ENCODE measurements at regions of chr3 and their contacts with region 1.

Region 1: DNA sequence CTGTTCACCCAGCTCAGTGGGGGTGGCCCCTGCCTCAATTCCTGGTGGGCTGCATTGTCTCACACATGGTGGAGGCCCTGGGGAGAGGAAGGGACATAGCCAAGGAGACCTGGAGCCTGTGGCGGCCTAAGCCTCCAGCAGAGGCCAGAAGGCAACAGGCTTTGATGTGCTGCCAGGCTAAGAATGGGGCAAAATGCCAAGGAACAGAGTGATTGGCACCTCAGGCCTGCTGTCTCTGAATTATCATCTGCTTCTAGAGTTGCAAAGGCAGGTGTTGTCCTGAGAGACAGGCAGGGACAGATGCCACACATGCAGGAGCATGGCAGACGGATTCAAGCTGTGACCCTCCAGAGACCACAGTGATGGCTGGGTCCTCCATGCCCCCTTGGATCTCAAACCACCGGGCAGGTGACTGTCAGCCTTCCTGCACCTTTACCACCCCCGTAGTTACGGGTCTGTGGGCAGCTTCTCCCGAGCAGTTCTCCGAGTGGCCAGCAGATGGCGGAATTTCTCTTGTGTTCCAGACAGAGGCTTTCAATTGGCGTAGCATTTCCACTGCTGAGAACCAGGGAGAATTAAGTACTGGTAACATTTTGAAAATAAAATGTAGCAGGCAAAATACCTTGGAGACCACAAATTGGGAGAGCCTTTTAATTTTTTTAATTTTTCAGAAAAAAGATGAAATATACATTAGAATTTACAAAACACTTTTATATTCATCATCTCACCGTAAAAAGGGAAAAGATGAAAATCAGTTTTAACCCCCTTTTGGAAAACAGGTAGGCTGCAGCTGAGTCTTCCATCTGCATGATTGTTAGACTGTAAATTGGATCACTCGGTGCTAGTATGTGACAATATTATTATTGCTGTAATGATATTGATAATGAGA is 525.5 kb upstream of the CFAP20DC start:
- DNase-seq: peak; percentile 80 to 98 (median 93)

Region 2: DNA sequence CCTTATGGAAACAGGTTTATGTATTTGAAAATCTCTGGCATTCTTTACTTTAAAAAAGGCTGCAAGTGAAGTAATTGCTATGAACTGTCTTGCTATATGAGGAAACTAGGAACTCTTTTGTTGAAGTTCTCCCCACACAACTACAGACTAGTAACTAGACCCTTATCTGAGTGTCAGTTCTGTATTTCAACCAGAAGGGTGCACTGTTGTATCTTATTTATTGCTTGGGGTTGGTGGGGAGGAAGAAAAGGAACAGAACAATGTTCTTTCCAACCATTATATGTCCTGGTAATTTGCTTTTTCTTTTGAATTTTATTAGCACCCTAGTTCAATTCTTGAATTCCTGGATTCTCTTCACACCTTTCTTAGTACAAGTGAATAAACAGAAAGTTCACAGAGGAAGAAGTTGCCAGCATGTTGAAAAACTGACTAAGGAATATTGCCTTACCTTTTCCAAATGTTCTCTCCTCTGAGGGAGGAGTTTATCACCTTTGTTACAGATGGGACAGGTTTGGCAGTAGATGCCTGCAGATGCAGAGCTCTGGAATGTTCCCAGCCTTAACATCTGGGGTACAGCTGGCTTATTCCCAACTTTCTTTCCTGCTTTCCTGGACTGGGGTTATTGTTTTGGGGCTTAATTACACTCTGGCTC is 363.1 kb before region 1 on chr3:
- intact Hi-C with region 1: loop called (anchors 5 kb)
- DNase-seq: no peak

Region 3: GRCh38 chr3:59809710-59810444 is 234.5 kb after region 1 on chr3:
- intact Hi-C with region 1: loop called (anchors 2 kb)
- DNase-seq: no peak

Region 4: DNA sequence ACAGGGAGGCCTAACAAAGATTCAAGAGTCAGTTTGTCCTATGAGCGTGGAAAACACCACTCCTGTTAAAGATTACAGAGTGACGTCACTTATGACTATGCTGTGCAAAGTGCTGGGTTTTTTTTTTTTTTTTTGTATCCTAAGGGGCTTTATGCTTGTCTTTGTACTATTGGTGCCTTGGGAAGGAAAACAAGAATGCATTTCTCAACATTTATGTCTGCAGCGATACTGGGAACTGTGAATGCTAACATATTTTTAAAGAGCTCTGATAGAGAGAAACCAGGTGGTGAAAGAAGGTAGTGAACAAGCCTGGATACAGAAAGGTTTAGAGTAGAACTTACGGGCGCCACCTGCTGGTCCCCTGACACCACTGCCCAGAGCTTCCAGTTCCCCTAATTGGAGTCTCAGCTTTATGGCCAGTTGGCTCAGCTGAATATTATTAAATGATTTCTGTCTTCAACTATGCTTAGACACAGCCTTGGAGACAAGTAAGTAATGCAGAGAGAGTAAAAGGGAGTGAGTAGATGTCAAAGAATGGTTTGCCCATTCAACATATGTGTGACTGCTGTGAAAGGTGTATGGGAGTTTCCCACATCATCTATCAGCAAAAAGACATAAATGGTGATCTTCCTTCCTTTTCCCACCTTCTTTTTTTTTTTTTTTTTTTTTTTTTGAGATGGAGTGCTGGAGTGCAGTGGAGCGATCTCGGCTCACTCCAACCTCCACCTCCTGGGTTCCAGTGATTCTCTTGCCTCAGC is 282.4 kb after region 1 on chr3:
- intact Hi-C with region 1: loop called (anchors 1 kb)
- DNase-seq: peak; percentile 45 to 96 (median 78)

Measured in posterior cingulate gyrus (tissue), 11 donors.